Psoas muscle (tissue), 8 donors: ENCODE measurements at regions of chr1 and their contacts with region 1.

Region 1: GRCh38 chr1:67580646-67581403 is 104.2 kb upstream of the GADD45A start:
- DNase-seq: peak in 1 of 2 donors; percentile 56
- ATAC-seq: peak; percentile 92 to 95 (median 94)
- H3K4me3 ChIP-seq: no peak overlapping the region
- H3K27ac ChIP-seq: peak overlapping the region; percentile 81
- H3K4me1 ChIP-seq: peaks cover 25% of the 10 kb centered on the region
- H3K27me3 ChIP-seq: no peaks in the 10 kb centered on the region
- CTCF ChIP-seq: no peak

Region 2: GRCh38 chr1:67612788-67613241 is 32.0 kb after region 1 on chr1:
- intact Hi-C with region 1: loop called in 1 of 2 experiments (anchors 1 kb)
- DNase-seq: no peak
- ATAC-seq: no peak
- H3K4me3 ChIP-seq: no peak overlapping the region
- H3K27ac ChIP-seq: no peak overlapping the region
- H3K4me1 ChIP-seq: peaks cover under 1% of the 10 kb centered on the region
- H3K27me3 ChIP-seq: no peaks in the 10 kb centered on the region
- CTCF ChIP-seq: no peak